ENCODE measurements at regions of chr2 and their contacts with region 1.

Region 1: GRCh38 chr2:197434541-197435513 is at the start of gene SF3B1:
- DNase-seq: peak; percentile 100
- H3K4me3 Mint-ChIP-seq: peak within 1 kb of the TSS; percentile 97
- H3K27ac Mint-ChIP-seq: peak within 1 kb of the TSS; percentile 100
- H3K4me1 Mint-ChIP-seq: peaks cover 45% of the 10 kb centered on the region
- H3K27me3 Mint-ChIP-seq: peaks cover 1% of the 10 kb centered on the region
- total RNA-seq, gene SF3B1: 228 to 245 TPM

Region 2: GRCh38 chr2:196482119-196483065 is 952.4 kb before region 1 on chr2:
- CTCF ChIA-PET with region 1: no interaction called
- POLR2A ChIA-PET with region 1: no interaction called
- intact Hi-C with region 1: no loop called
- DNase-seq: peak; percentile 19
- H3K4me3 Mint-ChIP-seq: no peak overlapping the region
- H3K27ac Mint-ChIP-seq: no peak overlapping the region
- H3K4me1 Mint-ChIP-seq: no peaks in the 10 kb centered on the region
- H3K27me3 Mint-ChIP-seq: peaks cover 12% of the 10 kb centered on the region

Region 3: DNA sequence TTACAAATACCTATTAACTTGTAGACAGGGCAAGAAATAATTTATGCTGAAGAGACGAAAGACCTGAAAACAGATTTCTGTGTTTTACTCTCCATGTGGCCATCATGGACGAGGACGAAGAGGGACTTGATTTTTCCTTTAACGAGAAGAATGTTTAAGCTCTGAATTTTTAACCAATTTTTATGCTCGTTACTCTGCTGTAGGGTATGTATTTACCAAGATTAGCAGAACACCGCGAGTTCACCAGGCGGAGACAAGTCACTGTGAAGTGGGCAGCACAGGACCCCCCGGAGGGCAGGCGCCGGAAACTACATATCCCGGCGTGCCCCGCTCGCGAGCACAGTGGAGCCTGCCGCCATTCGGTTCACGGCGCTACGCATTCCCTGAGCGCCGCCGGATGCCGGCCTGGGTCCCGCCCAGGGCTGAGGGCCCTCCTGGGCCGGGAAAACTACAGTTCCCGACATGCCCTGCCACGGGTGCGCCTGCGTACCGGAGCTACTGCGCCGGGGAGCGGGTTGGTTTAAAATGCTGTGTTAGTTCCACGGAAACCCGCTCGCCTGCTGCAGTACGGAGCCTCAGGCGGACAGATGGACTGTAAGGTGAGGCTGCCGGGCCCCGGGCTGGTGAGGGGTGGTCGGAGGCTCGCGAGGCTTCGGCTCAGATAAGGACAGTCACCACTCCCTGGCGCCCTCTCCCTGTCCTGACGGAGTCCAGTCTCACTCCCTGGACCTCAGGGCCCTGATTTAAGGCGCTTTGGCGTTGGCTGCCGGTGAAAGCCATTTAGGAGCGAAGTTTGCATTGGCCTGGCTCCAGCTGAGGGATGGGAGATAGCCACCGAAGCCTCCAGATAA is 795.4 kb before region 1 on chr2 and contains the start of gene CCDC150:
- CTCF ChIA-PET with region 1: no interaction called
- POLR2A ChIA-PET with region 1: no interaction called
- intact Hi-C with region 1: loop called (anchors 5 kb)
- DNase-seq: peak; percentile 97
- H3K4me3 Mint-ChIP-seq: peak within 1 kb of the TSS; percentile 90
- H3K27ac Mint-ChIP-seq: peak within 1 kb of the TSS; percentile 62
- H3K4me1 Mint-ChIP-seq: peaks cover 15% of the 10 kb centered on the region
- H3K27me3 Mint-ChIP-seq: no peaks in the 10 kb centered on the region
- total RNA-seq, gene CCDC150: 13.2 to 13.9 TPM

Region 4: GRCh38 chr2:197209742-197210408 is 225.0 kb before region 1 on chr2:
- CTCF ChIA-PET with region 1: no interaction called
- POLR2A ChIA-PET with region 1: no interaction called
- intact Hi-C with region 1: loop called (anchors 5 kb)
- DNase-seq: peak; percentile 86
- H3K4me3 Mint-ChIP-seq: peak overlapping the region; percentile 58
- H3K27ac Mint-ChIP-seq: peak overlapping the region; percentile 94
- H3K4me1 Mint-ChIP-seq: peaks cover 98% of the 10 kb centered on the region
- H3K27me3 Mint-ChIP-seq: no peaks in the 10 kb centered on the region

Region 5: DNA sequence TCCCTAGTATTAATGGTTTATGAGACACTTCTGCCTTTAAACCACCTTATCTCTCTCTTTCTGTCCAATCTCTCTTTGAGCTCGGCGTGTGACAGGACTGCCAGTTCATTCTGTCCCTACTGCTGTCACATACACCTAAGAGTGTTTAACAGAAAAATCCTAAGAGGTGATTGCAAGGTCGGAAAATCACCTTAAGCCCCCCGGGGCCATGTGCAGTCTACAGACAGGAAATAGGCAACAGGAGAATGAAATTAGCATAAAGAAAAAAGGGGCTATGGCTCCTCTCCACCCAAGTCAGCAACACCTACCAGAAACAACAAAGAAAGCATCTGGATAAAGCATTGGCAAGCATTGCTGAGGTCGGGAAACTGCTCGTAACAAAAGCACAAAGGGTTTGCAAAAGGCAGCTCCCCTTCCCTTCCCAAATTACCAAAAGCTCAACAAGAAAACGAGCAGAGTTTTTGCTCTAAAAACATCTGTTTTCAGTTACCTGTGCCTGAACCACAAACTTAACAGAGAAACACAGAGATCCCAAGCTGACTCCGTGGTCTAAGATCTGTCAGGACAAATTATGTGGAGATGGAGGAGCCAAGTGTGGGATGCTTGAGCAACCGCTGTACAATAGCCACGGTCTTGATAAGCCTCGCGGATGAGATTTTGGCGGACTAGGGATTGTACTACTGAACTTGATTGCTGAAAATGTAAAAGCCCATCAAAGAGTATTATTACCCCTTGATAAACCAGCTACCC is 154.7 kb before region 1 on chr2:
- CTCF ChIA-PET with region 1: no interaction called
- POLR2A ChIA-PET with region 1: no interaction called
- intact Hi-C with region 1: no loop called
- DNase-seq: no peak
- H3K4me3 Mint-ChIP-seq: peak overlapping the region; percentile 20
- H3K27ac Mint-ChIP-seq: peak overlapping the region; percentile 72
- H3K4me1 Mint-ChIP-seq: peaks cover 75% of the 10 kb centered on the region
- H3K27me3 Mint-ChIP-seq: no peaks in the 10 kb centered on the region

Region 6: GRCh38 chr2:197499594-197500526 is 65.0 kb after region 1 on chr2 and contains the starts of genes HSPD1 and HSPE1:
- CTCF ChIA-PET with region 1: interaction called, 5 read pairs
- POLR2A ChIA-PET with region 1: interaction called, 76 read pairs
- intact Hi-C with region 1: loop called (anchors 1 kb)
- DNase-seq: peak; percentile 99
- H3K4me3 Mint-ChIP-seq: peak within 1 kb of the TSS; percentile 97
- H3K27ac Mint-ChIP-seq: peak within 1 kb of the TSS; percentile 97
- H3K4me1 Mint-ChIP-seq: peaks cover 56% of the 10 kb centered on the region
- H3K27me3 Mint-ChIP-seq: no peaks in the 10 kb centered on the region
- total RNA-seq, gene HSPD1: 839 to 853 TPM
- total RNA-seq, gene HSPE1: 282 to 283 TPM

Region 7: GRCh38 chr2:197777823-197778407 is 343.1 kb after region 1 on chr2:
- CTCF ChIA-PET with region 1: interaction called, 4 read pairs
- POLR2A ChIA-PET with region 1: no interaction called
- intact Hi-C with region 1: loop called (anchors 5 kb)
- DNase-seq: no peak
- H3K4me3 Mint-ChIP-seq: no peak overlapping the region
- H3K27ac Mint-ChIP-seq: no peak overlapping the region
- H3K4me1 Mint-ChIP-seq: no peaks in the 10 kb centered on the region
- H3K27me3 Mint-ChIP-seq: peaks cover 5% of the 10 kb centered on the region